ENCODE measurements at regions of chr17 and their contacts with region 1.

Region 1: DNA sequence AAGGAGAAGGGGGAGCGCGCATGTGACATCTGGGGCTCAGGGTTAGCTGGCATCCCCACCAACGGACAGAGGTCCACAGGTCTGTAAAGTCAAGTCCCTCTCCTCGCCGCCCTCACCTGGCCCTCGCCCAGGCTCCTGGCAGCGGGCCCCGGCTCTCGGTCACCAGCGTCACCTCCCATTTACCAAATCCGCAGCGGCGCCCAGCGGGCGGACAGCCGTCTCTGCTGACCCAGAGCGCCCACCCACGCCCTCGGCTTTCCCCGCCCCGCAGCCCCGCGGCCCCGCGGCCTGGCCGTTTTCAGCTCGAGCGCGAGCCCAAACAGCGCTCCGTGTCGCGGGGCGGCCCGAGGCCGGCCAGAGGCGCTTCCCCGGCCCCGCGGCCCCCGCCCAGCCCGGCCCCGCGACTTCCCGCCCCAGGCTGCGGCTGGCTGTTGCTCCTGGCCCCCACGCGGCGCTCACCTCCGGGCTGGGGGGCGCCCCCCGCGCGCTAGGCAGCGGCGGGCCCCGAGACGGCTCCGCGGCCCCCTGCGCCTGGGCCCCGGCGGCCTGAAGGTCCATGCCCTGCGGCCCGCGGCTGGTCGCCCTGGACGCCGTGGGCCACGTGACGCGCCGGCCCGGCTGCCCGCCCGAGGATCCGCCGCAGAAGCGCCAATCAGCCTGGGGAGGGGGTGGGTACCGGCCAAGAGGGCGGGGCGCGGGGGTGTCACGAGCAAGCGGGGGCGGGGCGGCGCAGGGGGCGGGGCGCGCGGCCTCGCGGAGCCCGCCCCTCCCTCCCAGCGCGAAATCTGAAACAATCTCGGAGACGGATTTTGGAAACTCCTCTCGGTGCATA is at the start of gene COPRS:
- DNase-seq: peak; percentile 91
- ATAC-seq: peak; percentile 77
- H3K4me3 Mint-ChIP-seq: peak within 1 kb of the TSS; percentile 84
- H3K27ac Mint-ChIP-seq: peak within 1 kb of the TSS; percentile 86
- H3K4me1 Mint-ChIP-seq: peaks cover 19% of the 10 kb centered on the region
- H3K27me3 Mint-ChIP-seq: no peaks in the 10 kb centered on the region
- total RNA-seq, gene COPRS: 35.0 to 41.3 TPM

Region 2: GRCh38 chr17:31487648-31488263 is 371.1 kb before region 1 on chr17:
- CTCF ChIA-PET with region 1: no interaction called
- POLR2A ChIA-PET with region 1: no interaction called
- intact Hi-C with region 1: loop called in 1 of 2 experiments (anchors 1 kb)
- DNase-seq: peak; percentile 95
- ATAC-seq: peak; percentile 92
- H3K4me3 Mint-ChIP-seq: peak overlapping the region; percentile 84
- H3K27ac Mint-ChIP-seq: peak overlapping the region; percentile 82
- H3K4me1 Mint-ChIP-seq: peaks cover 48% of the 10 kb centered on the region
- H3K27me3 Mint-ChIP-seq: no peaks in the 10 kb centered on the region

Region 3: DNA sequence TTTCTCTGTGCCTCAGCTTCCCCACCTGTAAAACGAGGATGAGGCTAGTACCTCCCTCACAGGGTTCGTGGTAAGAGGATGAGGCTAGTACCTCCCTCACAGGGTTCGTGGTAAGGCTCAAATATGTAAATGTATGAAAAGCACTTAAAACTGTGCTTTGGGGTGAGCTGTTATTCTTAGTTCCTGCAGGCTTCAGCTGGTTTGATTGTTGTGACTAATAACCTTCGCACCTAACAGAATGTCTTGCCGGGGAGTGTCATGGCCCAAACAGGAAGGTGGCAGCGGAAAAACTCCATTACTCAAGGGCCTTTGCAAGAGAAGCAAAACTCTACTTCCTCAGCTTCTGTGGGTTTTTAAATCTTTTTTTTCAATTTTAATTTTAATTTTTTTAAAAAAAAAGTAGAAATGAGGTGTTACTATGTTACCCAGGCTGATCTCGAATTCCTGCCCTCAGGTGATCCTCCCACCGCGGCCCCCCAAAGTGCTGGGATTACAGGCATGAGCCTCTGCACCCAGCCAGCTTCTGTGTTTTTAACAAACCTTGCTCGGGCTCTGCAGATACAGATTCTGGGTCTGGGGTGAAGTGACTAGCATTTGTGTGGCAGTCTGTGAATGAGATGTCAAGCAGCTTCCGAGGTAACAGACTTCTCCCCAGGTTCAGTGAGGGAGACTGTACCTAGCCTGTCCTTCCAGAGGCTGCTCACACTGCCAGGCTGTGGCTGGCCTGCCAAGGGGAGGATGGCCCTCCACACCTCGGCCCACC is 364.4 kb before region 1 on chr17:
- CTCF ChIA-PET with region 1: no interaction called
- POLR2A ChIA-PET with region 1: no interaction called
- intact Hi-C with region 1: loop called in 1 of 2 experiments (anchors 2 kb)
- DNase-seq: peak; percentile 82
- ATAC-seq: peak; percentile 86
- H3K4me3 Mint-ChIP-seq: peak overlapping the region; percentile 58
- H3K27ac Mint-ChIP-seq: peak overlapping the region; percentile 97
- H3K4me1 Mint-ChIP-seq: peaks cover 91% of the 10 kb centered on the region
- H3K27me3 Mint-ChIP-seq: no peaks in the 10 kb centered on the region

Region 4: GRCh38 chr17:31558748-31559644 is 299.9 kb before region 1 on chr17:
- CTCF ChIA-PET with region 1: no interaction called
- POLR2A ChIA-PET with region 1: no interaction called
- intact Hi-C with region 1: loop called in 1 of 2 experiments (anchors 1 kb)
- DNase-seq: peak; percentile 75
- ATAC-seq: peak; percentile 83
- H3K4me3 Mint-ChIP-seq: peak overlapping the region; percentile 59
- H3K27ac Mint-ChIP-seq: no peak overlapping the region
- H3K4me1 Mint-ChIP-seq: peaks cover 18% of the 10 kb centered on the region
- H3K27me3 Mint-ChIP-seq: peaks cover 5% of the 10 kb centered on the region

Region 5: DNA sequence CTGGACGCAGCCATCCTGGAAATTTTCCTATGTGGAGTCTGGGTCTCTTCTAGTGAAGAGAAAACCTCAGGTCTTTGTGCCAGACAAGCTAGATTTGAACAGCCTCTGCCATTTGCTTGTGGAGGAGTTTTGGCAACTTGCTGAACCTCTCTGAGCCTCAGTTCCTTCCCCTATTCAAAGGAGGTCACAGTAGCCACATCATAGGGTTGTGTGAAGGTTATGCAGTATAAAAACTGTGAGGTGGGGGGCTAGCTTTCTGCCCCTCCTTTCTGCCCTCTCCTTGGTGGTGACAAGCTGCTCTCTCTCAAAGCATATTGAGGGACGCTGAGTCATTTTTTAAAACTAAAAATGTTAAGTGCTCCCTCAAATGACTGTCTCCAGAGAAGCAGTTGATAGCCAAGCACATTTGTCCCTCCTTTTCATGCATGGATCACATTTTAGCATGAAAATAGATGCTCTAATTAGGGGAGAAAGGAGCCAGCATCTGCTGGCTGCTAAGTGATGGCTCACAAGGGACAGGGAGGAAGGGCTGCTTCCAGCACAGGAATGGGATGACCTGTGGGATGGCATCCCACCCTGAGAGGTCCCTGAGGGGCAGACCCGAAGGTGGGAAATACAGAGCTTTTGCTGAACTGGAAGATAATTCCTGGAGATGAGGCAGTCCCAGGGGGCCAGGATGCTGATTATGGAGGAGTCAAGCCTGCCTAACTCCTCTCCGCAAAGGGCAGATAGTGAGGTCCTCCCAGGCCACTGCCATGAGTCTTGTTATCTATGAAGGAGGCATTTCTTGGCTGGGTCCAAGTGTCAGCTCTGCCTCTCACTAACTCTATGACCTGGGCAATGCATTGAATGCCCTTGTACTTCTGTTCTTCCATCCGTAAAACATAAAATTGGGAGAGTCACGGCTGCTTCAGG is 248.6 kb before region 1 on chr17:
- CTCF ChIA-PET with region 1: no interaction called
- POLR2A ChIA-PET with region 1: no interaction called
- intact Hi-C with region 1: no loop called
- DNase-seq: no peak
- ATAC-seq: no peak
- H3K4me3 Mint-ChIP-seq: no peak overlapping the region
- H3K27ac Mint-ChIP-seq: no peak overlapping the region
- H3K4me1 Mint-ChIP-seq: no peaks in the 10 kb centered on the region
- H3K27me3 Mint-ChIP-seq: no peaks in the 10 kb centered on the region

Region 6: DNA sequence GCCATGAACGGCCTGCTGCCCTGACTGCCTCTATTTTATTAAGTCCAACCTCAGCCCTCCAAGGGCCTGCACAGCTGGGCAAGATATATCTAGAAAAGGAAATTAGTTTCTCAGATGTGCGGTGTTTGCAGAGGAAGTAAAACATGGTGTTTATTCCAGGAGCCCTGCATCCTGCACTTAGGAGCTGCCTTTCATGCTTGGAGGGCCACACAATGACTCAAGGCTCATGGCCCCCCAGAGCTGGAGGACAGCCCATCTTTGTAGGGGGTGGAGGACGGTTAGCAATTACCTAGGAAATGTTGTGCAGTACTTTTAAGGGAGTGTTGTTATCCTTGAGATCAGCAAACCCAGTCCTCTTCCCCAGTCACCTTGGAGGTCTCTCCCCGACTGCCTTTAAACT is 80.3 kb before region 1 on chr17:
- CTCF ChIA-PET with region 1: no interaction called
- POLR2A ChIA-PET with region 1: no interaction called
- intact Hi-C with region 1: no loop called
- DNase-seq: no peak
- ATAC-seq: no peak
- H3K4me3 Mint-ChIP-seq: no peak overlapping the region
- H3K27ac Mint-ChIP-seq: no peak overlapping the region
- H3K4me1 Mint-ChIP-seq: no peaks in the 10 kb centered on the region
- H3K27me3 Mint-ChIP-seq: peaks cover 10% of the 10 kb centered on the region

Region 7: GRCh38 chr17:31877911-31878702 is 19.2 kb after region 1 on chr17:
- CTCF ChIA-PET with region 1: interaction called, 4 read pairs
- POLR2A ChIA-PET with region 1: no interaction called
- intact Hi-C with region 1: loop called in 1 of 2 experiments (anchors 1 kb)
- DNase-seq: peak; percentile 63
- ATAC-seq: peak; percentile 89
- H3K4me3 Mint-ChIP-seq: peak overlapping the region; percentile 23
- H3K27ac Mint-ChIP-seq: peak overlapping the region; percentile 94
- H3K4me1 Mint-ChIP-seq: peaks cover 25% of the 10 kb centered on the region
- H3K27me3 Mint-ChIP-seq: no peaks in the 10 kb centered on the region

Region 8: DNA sequence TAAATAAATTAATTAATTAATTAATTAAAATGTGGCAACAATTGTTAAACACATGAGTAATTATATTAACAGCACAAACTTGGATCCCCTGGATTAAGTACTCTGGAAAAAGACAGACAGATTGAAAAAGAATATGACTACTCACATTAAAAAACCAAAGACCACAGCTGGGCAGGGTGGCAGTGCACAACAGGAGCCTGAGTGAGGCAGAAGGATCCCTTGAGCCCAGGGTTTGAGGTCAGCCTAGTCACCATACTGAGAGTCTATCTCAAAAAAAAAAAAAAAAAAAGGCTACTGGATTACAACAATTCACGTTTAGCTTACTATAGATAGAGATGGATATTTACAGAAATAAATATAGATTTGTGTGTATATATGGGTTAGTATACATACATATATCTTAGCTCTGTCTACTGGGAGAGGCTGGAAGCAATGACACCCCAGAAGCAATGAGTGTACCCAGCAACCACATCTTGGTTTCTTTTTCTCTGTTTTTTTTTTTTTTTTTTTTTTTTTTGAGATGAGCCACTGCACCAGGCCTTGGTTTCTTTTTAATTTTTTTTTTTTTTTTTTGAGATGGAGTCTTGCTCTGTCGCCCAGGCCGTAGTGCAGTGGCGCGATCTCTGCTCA is 67.4 kb after region 1 on chr17:
- CTCF ChIA-PET with region 1: no interaction called
- POLR2A ChIA-PET with region 1: no interaction called
- intact Hi-C with region 1: no loop called
- DNase-seq: peak; percentile 55
- ATAC-seq: peak; percentile 88
- H3K4me3 Mint-ChIP-seq: no peak overlapping the region
- H3K27ac Mint-ChIP-seq: peak overlapping the region; percentile 63
- H3K4me1 Mint-ChIP-seq: peaks cover 5% of the 10 kb centered on the region
- H3K27me3 Mint-ChIP-seq: no peaks in the 10 kb centered on the region

Measured in activated CD4-positive, alpha-beta T cell treated with anti-CD3 and anti-CD28 coated beads for 36 hours (primary cell).